SK-N-SH (cell line): ENCODE measurements at regions of chr22 and their contacts with region 1.

Region 1: GRCh38 chr22:28855355-28856094 is 27.8 kb upstream of the ZNRF3 start:
- DNase-seq: peak; percentile 71
- H3K4me3 ChIP-seq: no peak overlapping the region; a peak in 1 of 4 replicates
- H3K27ac ChIP-seq: no peak overlapping the region
- H3K4me1 ChIP-seq: no peaks in the 10 kb centered on the region
- H3K27me3 ChIP-seq: no peaks in the 10 kb centered on the region
- CTCF ChIP-seq: peak; percentile 91
- EP300 ChIP-seq: no peak
- RAD21 ChIP-seq: peak; percentile 95

Region 2: DNA sequence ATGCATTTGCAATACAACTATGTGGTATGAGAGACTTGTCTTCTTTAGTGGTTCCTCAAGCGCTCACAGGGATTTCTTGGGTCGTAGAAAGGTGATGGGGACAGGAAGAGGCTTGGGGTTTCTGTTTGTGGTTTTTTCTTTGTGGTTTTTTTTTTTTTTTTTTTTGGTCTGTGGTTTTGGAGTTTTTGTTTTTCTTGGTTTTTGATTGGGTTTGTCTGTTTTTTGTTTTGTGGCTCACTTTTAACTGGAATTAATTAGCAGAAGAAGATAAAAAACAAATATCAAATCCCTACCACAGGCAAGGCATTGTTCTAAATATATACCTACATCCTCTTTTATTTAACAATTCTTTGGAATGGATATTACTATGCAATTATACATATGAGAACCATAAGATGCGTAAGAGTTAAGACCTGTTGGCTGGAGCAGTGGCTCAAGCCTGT is 181.4 kb before region 1 on chr22:
- CTCF ChIA-PET with region 1: no interaction called
- POLR2A ChIA-PET with region 1: no interaction called
- DNase-seq: peak; percentile 10
- H3K4me3 ChIP-seq: no peak overlapping the region
- H3K27ac ChIP-seq: no peak overlapping the region
- H3K4me1 ChIP-seq: peaks cover 0 to 5% of the 10 kb centered on the region in 2 experiments; a peak in 1 of 4 replicates
- H3K27me3 ChIP-seq: no peaks in the 10 kb centered on the region
- CTCF ChIP-seq: no peak
- EP300 ChIP-seq: no peak
- RAD21 ChIP-seq: no peak

Region 3: DNA sequence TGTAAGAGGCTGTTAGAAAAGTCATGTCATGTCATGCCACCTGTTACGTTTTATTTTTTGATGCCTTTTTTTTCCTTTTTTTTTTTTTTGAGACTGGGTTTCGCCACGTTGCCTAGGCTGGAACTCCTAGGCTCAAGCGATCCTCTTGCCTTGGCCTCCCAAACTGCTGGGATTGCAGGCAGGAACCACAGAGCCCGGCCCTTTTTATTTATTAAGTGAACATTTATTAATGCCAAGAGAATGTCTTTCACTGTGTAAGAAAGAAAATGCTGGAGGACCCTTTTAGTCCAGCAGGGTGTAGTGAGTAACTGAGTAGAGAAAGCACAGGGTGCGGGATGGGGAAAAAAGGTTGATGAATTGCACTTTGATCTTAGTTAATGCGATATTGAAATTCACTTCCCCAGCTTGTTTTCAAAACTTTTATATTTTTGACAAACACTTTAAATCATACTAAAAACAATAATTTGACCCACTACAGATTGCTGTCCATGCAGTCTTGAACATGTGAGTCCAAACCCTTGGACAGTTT is 52.9 kb before region 1 on chr22:
- CTCF ChIA-PET with region 1: no interaction called
- POLR2A ChIA-PET with region 1: no interaction called
- DNase-seq: no peak
- H3K4me3 ChIP-seq: no peak overlapping the region
- H3K27ac ChIP-seq: no peak overlapping the region
- H3K4me1 ChIP-seq: peaks cover 2 to 7% of the 10 kb centered on the region in 2 experiments; a peak in 1 of 4 replicates
- H3K27me3 ChIP-seq: no peaks in the 10 kb centered on the region
- CTCF ChIP-seq: no peak
- EP300 ChIP-seq: no peak
- RAD21 ChIP-seq: no peak

Region 4: GRCh38 chr22:29031227-29032011 is 175.9 kb after region 1 on chr22:
- CTCF ChIA-PET with region 1: interaction called, 26 read pairs
- POLR2A ChIA-PET with region 1: no interaction called
- DNase-seq: peak; percentile 70
- H3K4me3 ChIP-seq: peak overlapping the region; percentile 46 to 54
- H3K27ac ChIP-seq: peak overlapping the region; percentile 86 to 99
- H3K4me1 ChIP-seq: peaks cover 22 to 32% of the 10 kb centered on the region in 2 experiments
- H3K27me3 ChIP-seq: no peaks in the 10 kb centered on the region
- CTCF ChIP-seq: peak; percentile 33; the same call in 1 of the 2 replicates
- EP300 ChIP-seq: peak in 1 of 2 experiments; percentile 86; a peak in 2 of 4 replicates
- RAD21 ChIP-seq: no peak

Region 5: GRCh38 chr22:29055192-29055830 is 199.8 kb after region 1 on chr22:
- CTCF ChIA-PET with region 1: interaction called, 11 read pairs
- POLR2A ChIA-PET with region 1: no interaction called
- DNase-seq: no peak
- H3K4me3 ChIP-seq: no peak overlapping the region
- H3K27ac ChIP-seq: no peak overlapping the region
- H3K4me1 ChIP-seq: no peaks in the 10 kb centered on the region; a peak in 1 of 4 replicates
- H3K27me3 ChIP-seq: no peaks in the 10 kb centered on the region
- CTCF ChIP-seq: no peak
- EP300 ChIP-seq: no peak
- RAD21 ChIP-seq: no peak